ENCODE measurements at regions of chr3 and their contacts with region 1.

Region 1: GRCh38 chr3:157130467-157131251 is 29.3 kb downstream of the CCNL1 start:
- DNase-seq: peak; percentile 78
- H3K4me3 ChIP-seq: peak overlapping the region in 2 of 8 donors; percentile 13 to 35
- H3K27ac ChIP-seq: peak overlapping the region; percentile 39 to 87 (median 72)
- H3K4me1 ChIP-seq: peaks cover 14 to 65% (median 44%) of the 10 kb centered on the region in 6 donors
- H3K27me3 ChIP-seq: no peaks in the 10 kb centered on the region
- CTCF ChIP-seq: peak; percentile 15 to 68 (median 61)
- POLR2A ChIP-seq: no peak

Region 2: DNA sequence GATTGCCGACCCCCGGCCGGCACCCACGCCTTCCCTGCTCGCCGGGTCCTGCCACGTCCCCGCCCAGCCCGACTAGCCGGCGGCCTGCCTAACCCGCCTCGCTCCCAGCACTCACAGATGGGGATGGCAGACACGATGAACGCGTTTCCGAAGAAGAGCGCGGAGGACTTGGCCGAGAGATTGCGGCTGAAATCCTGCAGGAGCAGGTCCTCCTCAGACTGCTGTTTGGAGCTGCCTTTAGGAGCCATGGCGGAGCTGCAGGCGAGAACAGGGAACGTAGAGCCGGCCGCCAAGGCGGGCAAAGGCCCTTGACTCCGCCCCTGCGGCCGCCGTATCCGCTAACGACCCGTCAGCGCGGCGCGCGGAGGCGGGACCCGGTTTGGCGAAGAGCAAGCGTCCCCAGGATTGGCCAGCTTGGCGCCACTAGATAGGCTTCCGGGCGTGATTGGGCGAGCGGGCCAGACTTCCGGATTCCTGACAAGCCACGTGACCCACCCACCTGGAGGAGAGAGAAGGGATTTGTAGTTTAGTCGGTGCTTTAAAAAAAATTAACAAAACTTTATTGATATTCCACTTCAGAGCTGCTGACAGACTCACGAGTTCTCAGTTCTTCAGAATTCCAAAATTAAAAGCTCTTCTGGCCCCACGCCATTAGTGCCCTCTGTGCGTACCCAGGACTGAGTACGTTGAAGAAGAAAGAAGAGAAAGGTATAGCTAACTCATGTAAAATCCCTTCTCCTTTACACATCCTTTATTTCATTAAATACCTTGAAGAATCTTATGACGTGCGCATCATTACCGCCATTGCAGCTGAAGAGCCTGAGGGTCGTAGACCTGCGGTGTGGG is 575.6 kb before region 1 on chr3 and contains the start of gene SSR3:
- intact Hi-C with region 1: loop called (anchors 10 kb)
- DNase-seq: peak; percentile 99
- H3K4me3 ChIP-seq: peak within 1 kb of the TSS; percentile 73 to 93 (median 82)
- H3K27ac ChIP-seq: peak within 1 kb of the TSS; percentile 66 to 91 (median 86)
- H3K4me1 ChIP-seq: peaks cover 18 to 51% (median 38%) of the 10 kb centered on the region in 6 donors
- H3K27me3 ChIP-seq: no peaks in the 10 kb centered on the region
- CTCF ChIP-seq: peak; percentile 30 to 88 (median 68)
- POLR2A ChIP-seq: peak in 1 of 3 donors; percentile 67
- total RNA-seq, gene SSR3: 88.0 to 123 (median 107) TPM

Region 3: DNA sequence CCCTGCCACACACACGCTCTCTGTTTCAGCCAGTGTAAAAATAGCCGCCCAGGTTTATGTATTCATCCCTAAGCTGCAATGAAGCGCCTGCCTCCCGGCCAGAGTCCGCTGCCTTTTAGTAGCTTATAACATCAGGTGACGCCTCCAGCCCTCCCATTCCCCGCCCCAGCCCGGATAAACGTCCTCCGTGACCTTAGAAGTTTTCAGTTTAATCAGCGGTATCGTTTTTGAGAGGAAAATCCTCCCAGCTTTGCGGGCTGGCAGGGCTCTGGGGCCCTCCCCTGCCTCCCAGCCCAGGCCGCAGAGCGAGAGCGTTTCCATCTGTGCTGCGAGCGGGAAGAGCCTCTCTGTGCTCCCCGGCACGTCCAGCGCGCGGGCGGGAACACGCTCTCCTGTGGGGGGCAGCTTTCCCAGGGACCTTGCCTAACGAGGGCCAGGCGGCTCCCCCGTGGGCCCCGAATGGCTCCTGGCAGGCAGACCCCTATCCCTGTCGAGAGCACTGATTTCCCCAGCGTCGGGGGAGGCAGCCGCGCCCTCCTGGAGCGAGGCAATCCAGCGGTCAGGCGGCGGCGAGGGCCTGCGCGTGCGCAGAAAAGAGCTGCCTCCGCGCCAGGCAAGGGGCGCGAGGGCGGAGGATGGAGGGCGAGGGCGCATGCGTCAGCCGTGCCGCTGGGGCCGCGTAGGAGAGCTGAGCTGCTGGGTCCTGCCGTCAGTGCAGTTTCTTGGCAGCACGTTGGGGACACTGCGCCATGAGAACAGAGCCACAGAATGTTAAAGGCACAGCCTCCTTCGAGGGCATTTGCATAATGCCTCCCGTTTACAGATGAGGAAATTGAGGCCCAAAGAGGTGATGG is 41.8 kb before region 1 on chr3:
- intact Hi-C with region 1: loop called (anchors 5 kb)
- DNase-seq: peak; percentile 98
- H3K4me3 ChIP-seq: peak overlapping the region; percentile 48 to 77 (median 56)
- H3K27ac ChIP-seq: peak overlapping the region; percentile 95 to 99 (median 96)
- H3K4me1 ChIP-seq: peaks cover 16 to 53% (median 38%) of the 10 kb centered on the region in 6 donors
- H3K27me3 ChIP-seq: peaks cover 0 to 4% (median 0%) of the 10 kb centered on the region in 7 donors
- CTCF ChIP-seq: peak in 7 of 11 experiments; percentile 4 to 35 (median 25)
- POLR2A ChIP-seq: peak in 1 of 3 donors; percentile 71